Activated CD4-positive, alpha-beta T cell treated with anti-CD3 and anti-CD28 coated beads, Interleukin-2, amount 10 ng/mL, durations not matched to agents 7 days and 5 days (primary cell): ENCODE measurements at regions of chr9 and their contacts with region 1.

Region 1: GRCh38 chr9:124680049-124680448 is 91.1 kb downstream of the NR6A1 start:
- DNase-seq: no peak
- H3K4me3 Mint-ChIP-seq: no peak overlapping the region
- H3K27ac Mint-ChIP-seq: no peak overlapping the region
- H3K4me1 Mint-ChIP-seq: no peaks in the 10 kb centered on the region
- H3K27me3 Mint-ChIP-seq: peaks cover 4% of the 10 kb centered on the region

Region 2: DNA sequence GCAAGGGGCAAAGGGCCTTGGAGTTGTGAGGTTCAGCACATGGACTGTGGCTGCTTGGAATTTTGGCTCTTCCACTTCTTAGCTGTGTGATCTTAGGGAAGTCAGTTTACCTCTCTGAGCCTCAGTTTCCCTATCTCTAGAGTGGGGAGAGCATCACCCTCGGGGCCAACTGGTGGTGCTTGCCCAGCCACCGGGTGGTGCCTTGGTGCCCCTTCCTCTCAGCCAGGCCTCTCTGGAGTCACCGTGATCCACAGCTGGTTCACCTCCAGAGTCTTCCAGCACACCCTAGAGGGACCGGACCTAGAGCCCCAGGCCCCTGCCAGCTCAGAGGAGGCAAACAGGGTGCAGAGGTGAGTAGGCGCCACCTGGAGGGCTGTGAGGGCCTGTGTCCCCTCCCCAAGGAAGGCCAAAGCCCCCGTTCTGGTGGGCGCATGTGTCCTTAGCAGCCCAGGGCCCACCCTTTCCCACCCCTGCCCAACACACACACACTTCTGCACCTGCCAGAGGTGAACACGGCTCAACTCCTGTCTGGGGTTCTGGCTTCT is 222.1 kb before region 1 on chr9:
- CTCF ChIA-PET with region 1: no interaction called
- POLR2A ChIA-PET with region 1: no interaction called
- DNase-seq: no peak
- H3K4me3 Mint-ChIP-seq: no peak overlapping the region
- H3K27ac Mint-ChIP-seq: no peak overlapping the region
- H3K4me1 Mint-ChIP-seq: no peaks in the 10 kb centered on the region
- H3K27me3 Mint-ChIP-seq: peaks cover 8% of the 10 kb centered on the region

Region 3: GRCh38 chr9:124652203-124652992 is 27.7 kb before region 1 on chr9:
- CTCF ChIA-PET with region 1: interaction called, 7 read pairs
- POLR2A ChIA-PET with region 1: interaction called, 16 read pairs
- DNase-seq: no peak
- H3K4me3 Mint-ChIP-seq: no peak overlapping the region
- H3K27ac Mint-ChIP-seq: no peak overlapping the region
- H3K4me1 Mint-ChIP-seq: no peaks in the 10 kb centered on the region
- H3K27me3 Mint-ChIP-seq: peaks cover 17% of the 10 kb centered on the region